SK-N-SH (cell line): ENCODE measurements at regions of chr12 and their contacts with region 1.

Region 1: GRCh38 chr12:54279866-54280467 is at the start of gene CBX5:
- DNase-seq: peak; percentile 92
- H3K4me3 ChIP-seq: peak within 1 kb of the TSS; percentile 80 to 88
- H3K27ac ChIP-seq: peak within 1 kb of the TSS; percentile 93 to 99
- H3K4me1 ChIP-seq: peaks cover 15 to 26% of the 10 kb centered on the region in 2 experiments; a peak in 3 of 4 replicates
- H3K27me3 ChIP-seq: no peaks in the 10 kb centered on the region
- CTCF ChIP-seq: no peak
- EP300 ChIP-seq: peak in 1 of 2 experiments; percentile 4; a peak in 1 of 4 replicates
- RAD21 ChIP-seq: no peak
- polyA plus RNA-seq, gene CBX5: 11.6 and 14.1 TPM in 2 replicates

Region 2: GRCh38 chr12:54134850-54135249 is 145.1 kb before region 1 on chr12:
- CTCF ChIA-PET with region 1: no interaction called
- POLR2A ChIA-PET with region 1: no interaction called
- DNase-seq: peak; percentile 45
- H3K4me3 ChIP-seq: no peak overlapping the region
- H3K27ac ChIP-seq: peak overlapping the region in 1 of 2 experiments; percentile 67; a peak in 2 of 4 replicates
- H3K4me1 ChIP-seq: peaks cover 0 to 47% of the 10 kb centered on the region in 2 experiments; a peak in 2 of 4 replicates
- H3K27me3 ChIP-seq: no peaks in the 10 kb centered on the region
- CTCF ChIP-seq: no peak
- EP300 ChIP-seq: no peak
- RAD21 ChIP-seq: peak; percentile 76

Region 3: GRCh38 chr12:54259194-54260011 is 20.6 kb before region 1 on chr12:
- CTCF ChIA-PET with region 1: interaction called, 8 read pairs
- POLR2A ChIA-PET with region 1: interaction called, 36 read pairs
- DNase-seq: peak; percentile 90
- H3K4me3 ChIP-seq: peak overlapping the region; percentile 40 to 52
- H3K27ac ChIP-seq: peak overlapping the region; percentile 98 to 99
- H3K4me1 ChIP-seq: peaks cover 22 to 55% of the 10 kb centered on the region in 2 experiments
- H3K27me3 ChIP-seq: no peaks in the 10 kb centered on the region
- CTCF ChIP-seq: no peak
- EP300 ChIP-seq: peak in 1 of 2 experiments; percentile 71; a peak in 3 of 4 replicates
- RAD21 ChIP-seq: 0 out of 2 replicates have a peak, but pooled peaks have one; percentile 4

Region 4: DNA sequence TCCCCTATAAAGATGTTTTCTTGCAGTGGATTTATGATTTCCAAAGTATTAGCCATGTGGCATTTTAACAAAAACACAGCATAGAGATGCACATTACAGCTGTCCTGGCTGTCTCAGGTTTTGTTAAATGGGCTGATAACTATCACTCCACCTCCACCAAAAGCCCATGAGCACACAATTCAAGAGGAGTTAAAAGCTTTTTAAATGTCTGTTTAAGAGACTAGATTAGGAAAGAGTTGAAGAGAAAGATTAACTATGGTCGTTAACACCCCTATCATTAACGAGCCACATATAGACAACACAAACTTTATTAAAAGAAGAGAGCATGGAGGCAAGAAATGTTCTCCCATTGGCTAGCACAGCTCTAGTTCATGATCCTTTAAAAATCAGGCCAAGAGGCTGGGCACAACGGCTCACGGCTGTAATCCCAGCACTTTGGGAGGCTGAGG is 14.6 kb before region 1 on chr12:
- CTCF ChIA-PET with region 1: interaction called, 5 read pairs
- POLR2A ChIA-PET with region 1: interaction called, 36 read pairs
- DNase-seq: peak; percentile 48
- H3K4me3 ChIP-seq: no peak overlapping the region
- H3K27ac ChIP-seq: peak overlapping the region; percentile 3 to 86; a peak in 3 of 4 replicates
- H3K4me1 ChIP-seq: peaks cover 14 to 31% of the 10 kb centered on the region in 2 experiments
- H3K27me3 ChIP-seq: no peaks in the 10 kb centered on the region
- CTCF ChIP-seq: no peak
- EP300 ChIP-seq: no peak
- RAD21 ChIP-seq: no peak

Region 5: DNA sequence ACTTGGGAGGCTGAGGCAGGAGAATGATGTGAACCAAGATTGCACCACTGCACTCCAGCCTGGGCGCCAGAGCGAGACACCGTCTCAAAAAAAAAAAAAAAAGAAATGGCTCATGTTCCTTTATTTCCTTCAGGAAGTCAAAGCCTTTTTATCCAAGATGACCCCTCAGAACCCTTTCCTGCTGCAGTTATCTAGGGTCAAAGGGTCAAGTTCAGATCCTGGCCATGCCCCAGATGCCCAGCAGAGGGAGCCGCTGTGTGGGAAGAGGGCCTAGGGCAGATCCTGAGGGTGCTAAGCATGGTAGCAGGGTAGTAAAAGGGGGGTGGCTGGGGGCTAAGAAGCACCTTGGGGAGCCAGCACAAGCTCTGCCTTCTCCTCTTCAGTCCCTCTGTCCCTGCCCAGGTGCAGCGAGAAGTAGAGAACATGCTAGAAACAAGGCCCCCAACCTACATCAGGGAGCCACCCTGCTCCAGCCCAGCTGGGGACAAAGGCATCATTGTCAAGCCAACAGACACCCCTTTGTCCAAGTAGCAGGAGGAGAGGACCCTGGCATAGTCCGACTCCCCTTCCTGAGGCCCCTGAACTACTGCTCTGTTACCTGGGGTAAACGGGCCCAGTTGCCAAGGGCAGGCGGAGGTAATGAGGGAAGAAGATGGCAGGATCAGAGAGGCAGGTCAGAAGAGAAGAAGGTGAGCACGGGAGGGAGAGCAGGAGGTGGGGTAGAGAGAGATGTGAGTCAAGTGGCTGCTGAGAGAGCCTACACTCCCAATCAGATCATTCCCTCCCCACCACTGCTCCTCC is 14.4 kb after region 1 on chr12:
- CTCF ChIA-PET with region 1: interaction called, 29 read pairs
- POLR2A ChIA-PET with region 1: interaction called, 12 read pairs
- DNase-seq: peak; percentile 71
- H3K4me3 ChIP-seq: peak overlapping the region in 1 of 2 experiments; percentile 40; a peak in 1 of 4 replicates
- H3K27ac ChIP-seq: no peak overlapping the region
- H3K4me1 ChIP-seq: peaks cover 0 to 2% of the 10 kb centered on the region in 2 experiments; a peak in 1 of 4 replicates
- H3K27me3 ChIP-seq: no peaks in the 10 kb centered on the region
- CTCF ChIP-seq: peak; percentile 76
- EP300 ChIP-seq: no peak
- RAD21 ChIP-seq: peak; percentile 61

Region 6: DNA sequence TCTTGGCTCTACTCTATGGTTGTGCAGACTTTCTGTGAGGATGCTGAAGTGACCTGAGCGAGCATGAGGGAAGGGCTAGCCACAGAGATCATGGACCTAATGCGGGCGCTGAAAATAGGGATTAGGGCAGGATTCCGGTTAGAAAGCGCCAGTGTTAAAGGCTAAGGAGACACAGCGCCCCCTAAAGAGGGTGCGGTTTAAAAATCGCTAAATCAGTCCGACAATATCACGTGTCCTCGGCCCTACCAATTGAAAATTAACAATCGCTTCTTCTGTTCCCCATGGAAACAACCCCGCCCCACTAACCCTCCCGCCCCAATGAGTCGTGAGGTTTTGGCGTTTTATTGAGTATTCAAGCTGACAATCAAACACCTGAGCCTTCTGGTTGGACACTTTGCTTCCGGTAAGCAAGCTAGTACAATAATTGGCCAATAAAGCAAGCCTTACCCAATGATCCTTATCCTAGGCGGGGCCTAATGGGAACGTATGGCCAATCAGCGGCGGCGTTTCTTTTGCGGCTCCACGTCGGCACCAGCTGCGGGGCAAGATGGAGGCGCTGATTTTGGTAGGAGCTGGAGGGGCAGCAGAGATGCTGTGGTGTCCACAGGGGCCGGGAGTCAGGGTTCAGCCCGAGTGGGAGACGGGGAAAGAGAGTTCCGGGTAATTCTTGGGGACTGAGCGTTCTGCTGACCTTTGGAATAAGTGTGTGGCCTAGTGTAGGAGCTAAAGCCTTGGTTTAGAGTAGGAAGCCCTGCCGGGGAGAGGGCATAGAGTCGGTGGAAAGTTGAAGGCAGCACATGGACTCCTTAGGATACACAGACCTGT is 44.9 kb after region 1 on chr12 and contains the start of gene COPZ1:
- CTCF ChIA-PET with region 1: interaction called, 7 read pairs
- POLR2A ChIA-PET with region 1: interaction called, 12 read pairs
- DNase-seq: peak; percentile 90
- H3K4me3 ChIP-seq: peak within 1 kb of the TSS; percentile 68 to 86
- H3K27ac ChIP-seq: peak within 1 kb of the TSS; percentile 77 to 81
- H3K4me1 ChIP-seq: peaks cover 0 to 9% of the 10 kb centered on the region in 2 experiments; a peak in 2 of 4 replicates
- H3K27me3 ChIP-seq: no peaks in the 10 kb centered on the region
- CTCF ChIP-seq: peak; percentile 84
- EP300 ChIP-seq: 0 out of 4 replicates have a peak, but pooled peaks of 1 of the 2 experiments have one; percentile 35
- RAD21 ChIP-seq: peak; percentile 80
- polyA plus RNA-seq, gene COPZ1: 111 and 156 TPM in 2 replicates

Region 7: DNA sequence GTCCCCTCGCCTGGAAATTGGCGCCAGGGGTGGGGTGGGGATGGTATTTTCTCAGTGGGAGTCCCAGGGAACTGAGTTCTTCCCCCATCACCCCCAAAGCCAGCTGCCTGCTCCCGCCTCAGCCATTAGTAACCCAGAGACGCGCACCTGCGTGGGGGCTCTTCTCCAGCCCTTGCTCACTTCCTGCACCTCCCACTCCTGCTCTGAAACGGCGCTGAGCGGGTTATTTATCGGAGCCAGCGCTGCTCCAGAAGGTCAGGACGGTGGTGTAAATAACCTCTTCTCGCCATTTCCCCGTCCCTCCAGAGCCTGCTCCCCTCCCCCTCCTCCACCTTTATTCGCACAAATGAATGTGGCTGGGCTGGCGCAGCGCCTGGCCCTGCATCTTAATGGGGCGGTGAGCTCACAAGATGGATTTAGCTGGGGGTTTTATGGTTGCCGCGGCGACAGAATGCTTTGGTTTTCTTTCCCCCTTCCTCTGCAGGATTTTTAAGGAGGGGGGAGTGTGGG is 72.1 kb after region 1 on chr12:
- CTCF ChIA-PET with region 1: interaction called, 3 read pairs
- POLR2A ChIA-PET with region 1: interaction called, 18 read pairs
- DNase-seq: peak; percentile 65
- H3K4me3 ChIP-seq: peak overlapping the region in 1 of 2 experiments; percentile 25; a peak in 2 of 4 replicates
- H3K27ac ChIP-seq: peak overlapping the region; percentile 63 to 99
- H3K4me1 ChIP-seq: peaks cover 25 to 41% of the 10 kb centered on the region in 2 experiments
- H3K27me3 ChIP-seq: no peaks in the 10 kb centered on the region
- CTCF ChIP-seq: no peak
- EP300 ChIP-seq: peak in 1 of 2 experiments; percentile 14; a peak in 1 of 4 replicates
- RAD21 ChIP-seq: no peak